PC-3 (cell line): ENCODE measurements at regions of chr16 and their contacts with region 1.

Region 1: GRCh38 chr16:50884066-50884860 is 142.4 kb downstream of the CYLD start:
- DNase-seq: peak; percentile 48
- ATAC-seq: peak; percentile 56
- H3K4me3 ChIP-seq: no peak overlapping the region
- H3K27ac ChIP-seq: no peak overlapping the region
- H3K4me1 ChIP-seq: no peaks in the 10 kb centered on the region
- H3K27me3 ChIP-seq: no peaks in the 10 kb centered on the region
- CTCF ChIP-seq: peak; percentile 25

Region 2: DNA sequence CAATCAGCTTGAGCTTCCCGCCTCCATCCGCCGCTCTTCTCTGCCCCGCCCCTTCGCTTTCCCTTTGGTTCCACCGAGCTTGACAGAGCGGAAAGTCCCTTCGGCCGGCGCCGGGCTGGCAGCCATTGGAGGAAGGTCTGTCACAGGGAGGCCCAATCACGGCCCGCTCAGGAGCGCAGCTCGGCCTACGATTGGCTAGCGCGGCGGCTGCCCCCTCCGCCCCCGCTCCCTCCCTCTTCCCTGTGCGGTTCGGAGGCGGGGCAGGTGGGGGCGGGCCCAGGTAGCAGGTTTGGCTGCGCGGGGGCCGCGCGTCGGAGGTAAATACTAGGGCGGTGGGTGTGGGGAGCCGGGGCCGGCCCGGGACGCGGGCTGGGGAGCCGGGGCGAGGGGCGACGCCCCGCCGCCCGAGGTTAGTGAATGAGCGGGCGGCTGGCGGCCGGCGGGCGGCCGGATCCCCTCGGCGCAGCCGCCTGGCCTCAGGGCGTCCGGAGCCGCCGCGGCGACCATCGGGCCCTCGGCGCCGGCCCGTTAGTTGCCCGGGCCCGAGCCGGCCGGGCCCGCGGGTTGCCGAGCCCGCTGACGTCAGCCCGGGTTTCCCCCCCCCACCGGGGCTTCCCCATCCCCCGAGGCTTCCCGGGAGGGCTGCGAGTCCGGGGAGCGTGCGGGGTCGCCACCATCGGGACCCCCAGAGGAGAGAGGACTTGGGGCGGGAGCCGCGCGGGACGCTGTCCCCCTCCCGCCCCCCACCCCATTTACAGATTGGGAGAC is 142.3 kb before region 1 on chr16 and contains the start of gene CYLD:
- CTCF ChIA-PET with region 1: no interaction called
- POLR2A ChIA-PET with region 1: no interaction called
- intact Hi-C with region 1: no loop called
- DNase-seq: peak; percentile 97
- ATAC-seq: peak; percentile 97
- H3K4me3 ChIP-seq: peak within 1 kb of the TSS; percentile 77
- H3K27ac ChIP-seq: no peak within 1 kb of the TSS
- H3K4me1 ChIP-seq: peaks cover 34% of the 10 kb centered on the region
- H3K27me3 ChIP-seq: no peaks in the 10 kb centered on the region
- CTCF ChIP-seq: no peak
- total RNA-seq, gene CYLD: 8.5 and 8.6 TPM in 2 replicates

Region 3: DNA sequence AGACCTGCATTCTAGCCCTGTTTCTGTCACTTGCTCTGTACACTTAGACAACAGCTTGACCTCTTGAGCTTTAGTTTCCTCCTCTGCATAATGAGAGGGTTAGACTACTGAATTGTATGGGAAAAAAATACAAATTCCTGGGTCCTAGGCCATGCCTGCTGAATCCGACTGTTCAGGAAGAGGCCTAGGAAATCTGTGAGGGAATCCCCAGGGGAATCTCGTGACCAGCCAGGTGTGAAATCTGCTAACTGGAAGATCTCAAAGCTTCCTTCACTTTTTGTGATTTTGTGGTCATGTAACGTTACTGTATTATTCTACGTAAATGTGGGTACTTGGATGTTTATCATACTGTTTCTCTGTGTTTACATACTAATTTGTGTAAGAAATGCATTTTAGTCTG is 84.2 kb before region 1 on chr16:
- CTCF ChIA-PET with region 1: no interaction called
- POLR2A ChIA-PET with region 1: no interaction called
- intact Hi-C with region 1: no loop called
- DNase-seq: no peak
- ATAC-seq: no peak
- H3K4me3 ChIP-seq: no peak overlapping the region
- H3K27ac ChIP-seq: no peak overlapping the region
- H3K4me1 ChIP-seq: no peaks in the 10 kb centered on the region
- H3K27me3 ChIP-seq: no peaks in the 10 kb centered on the region
- CTCF ChIP-seq: no peak

Region 4: GRCh38 chr16:50821586-50821985 is 62.7 kb before region 1 on chr16:
- CTCF ChIA-PET with region 1: no interaction called
- POLR2A ChIA-PET with region 1: no interaction called
- intact Hi-C with region 1: loop called (anchors 5 kb)
- DNase-seq: peak; percentile 66
- ATAC-seq: peak; percentile 61
- H3K4me3 ChIP-seq: no peak overlapping the region
- H3K27ac ChIP-seq: no peak overlapping the region
- H3K4me1 ChIP-seq: no peaks in the 10 kb centered on the region
- H3K27me3 ChIP-seq: peaks cover 20% of the 10 kb centered on the region
- CTCF ChIP-seq: peak; percentile 51

Region 5: GRCh38 chr16:50839920-50840729 is 44.1 kb before region 1 on chr16:
- CTCF ChIA-PET with region 1: no interaction called
- POLR2A ChIA-PET with region 1: no interaction called
- intact Hi-C with region 1: loop called (anchors 5 kb)
- DNase-seq: no peak
- ATAC-seq: no peak
- H3K4me3 ChIP-seq: no peak overlapping the region
- H3K27ac ChIP-seq: no peak overlapping the region
- H3K4me1 ChIP-seq: no peaks in the 10 kb centered on the region
- H3K27me3 ChIP-seq: peaks cover 7% of the 10 kb centered on the region; the same call in 1 of the 2 replicates
- CTCF ChIP-seq: 0 out of 2 replicates have a peak, but pooled peaks have one; percentile 18

Region 6: GRCh38 chr16:50909831-50910735 is 25.8 kb after region 1 on chr16:
- CTCF ChIA-PET with region 1: no interaction called
- POLR2A ChIA-PET with region 1: no interaction called
- intact Hi-C with region 1: no loop called
- DNase-seq: no peak
- ATAC-seq: no peak
- H3K4me3 ChIP-seq: no peak overlapping the region
- H3K27ac ChIP-seq: no peak overlapping the region
- H3K4me1 ChIP-seq: no peaks in the 10 kb centered on the region
- H3K27me3 ChIP-seq: peaks cover 33% of the 10 kb centered on the region
- CTCF ChIP-seq: no peak